CD4-positive, alpha-beta T cell (primary cell): ENCODE measurements at regions of chr16 and their contacts with region 1.

Region 1: GRCh38 chr16:71845639-71846430 is at the start of gene ATXN1L:
- DNase-seq: peak; percentile 84 to 97 (median 90)
- ATAC-seq: peak; percentile 91
- H3K4me3 ChIP-seq: peak within 1 kb of the TSS; percentile 97
- H3K4me3 Mint-ChIP-seq: peak within 1 kb of the TSS; percentile 96
- H3K27ac ChIP-seq: peak within 1 kb of the TSS; percentile 82 to 91
- H3K27ac Mint-ChIP-seq: peak within 1 kb of the TSS; percentile 99
- H3K4me1 ChIP-seq: peaks cover 18% of the 10 kb centered on the region
- H3K4me1 Mint-ChIP-seq: peaks cover 35% of the 10 kb centered on the region
- H3K27me3 ChIP-seq: no peaks in the 10 kb centered on the region
- H3K27me3 Mint-ChIP-seq: no peaks in the 10 kb centered on the region
- CTCF ChIP-seq: no peak
- total RNA-seq, gene ATXN1L: 61.0 to 61.1 TPM

Region 2: GRCh38 chr16:71788578-71788977 is 57.3 kb before region 1 on chr16:
- CTCF ChIA-PET with region 1: no interaction called
- POLR2A ChIA-PET with region 1: no interaction called
- intact Hi-C with region 1: no loop called
- DNase-seq: no peak
- ATAC-seq: no peak
- H3K4me3 ChIP-seq: no peak overlapping the region
- H3K4me3 Mint-ChIP-seq: no peak overlapping the region
- H3K27ac ChIP-seq: no peak overlapping the region
- H3K27ac Mint-ChIP-seq: no peak overlapping the region
- H3K4me1 ChIP-seq: peaks cover 23% of the 10 kb centered on the region
- H3K4me1 Mint-ChIP-seq: peaks cover 66% of the 10 kb centered on the region
- H3K27me3 ChIP-seq: no peaks in the 10 kb centered on the region
- H3K27me3 Mint-ChIP-seq: no peaks in the 10 kb centered on the region
- CTCF ChIP-seq: no peak

Region 3: GRCh38 chr16:71903608-71904007 is 57.8 kb after region 1 on chr16:
- CTCF ChIA-PET with region 1: interaction called, 3 read pairs
- POLR2A ChIA-PET with region 1: no interaction called
- intact Hi-C with region 1: loop called in 1 of 2 experiments (anchors 2 kb)
- DNase-seq: no peak
- ATAC-seq: no peak
- H3K4me3 ChIP-seq: no peak overlapping the region
- H3K4me3 Mint-ChIP-seq: peak overlapping the region; percentile 1
- H3K27ac ChIP-seq: no peak overlapping the region
- H3K27ac Mint-ChIP-seq: peak overlapping the region; percentile 71
- H3K4me1 ChIP-seq: peaks cover 59% of the 10 kb centered on the region
- H3K4me1 Mint-ChIP-seq: peaks cover 87% of the 10 kb centered on the region
- H3K27me3 ChIP-seq: no peaks in the 10 kb centered on the region
- H3K27me3 Mint-ChIP-seq: no peaks in the 10 kb centered on the region
- CTCF ChIP-seq: no peak

Region 4: DNA sequence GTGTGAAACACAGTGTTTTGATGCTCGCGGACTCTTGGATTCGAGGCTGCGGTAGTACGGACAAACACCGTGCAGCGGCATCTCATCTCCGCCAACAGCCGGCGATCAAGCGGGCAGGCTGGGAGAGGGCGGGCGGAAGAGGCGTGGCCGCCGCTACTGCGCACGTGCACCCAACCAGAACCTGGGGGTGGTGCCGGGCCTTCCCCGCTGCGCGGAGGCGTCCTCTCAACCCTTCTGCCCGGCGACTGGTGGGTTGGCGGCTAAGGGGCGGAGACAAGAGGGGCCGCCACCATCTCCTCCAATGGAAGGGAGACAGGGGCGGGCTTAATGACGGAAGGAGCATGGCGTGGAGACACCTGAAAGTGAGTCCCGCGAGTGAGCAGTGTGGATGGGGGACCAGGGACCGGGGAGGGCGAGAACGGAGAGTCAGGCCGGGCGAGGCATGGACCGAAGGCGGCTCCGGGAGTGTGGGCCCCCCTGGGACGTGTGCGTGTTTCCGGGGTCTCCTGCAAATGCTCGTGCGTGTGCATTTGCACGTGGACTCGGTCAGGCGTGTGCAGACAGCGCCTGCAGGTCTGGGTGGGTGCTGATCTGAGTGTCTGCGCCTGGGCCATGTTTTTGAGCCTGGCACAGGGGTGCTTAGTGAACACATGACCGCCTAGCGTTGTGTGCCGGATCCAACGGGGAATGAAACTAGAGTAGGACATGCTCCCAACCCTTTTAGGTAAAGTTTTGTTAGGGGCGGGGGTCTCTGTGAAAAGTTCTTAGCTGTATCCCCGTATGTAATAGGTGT is 162.8 kb after region 1 on chr16 and contains the start of gene DHODH:
- CTCF ChIA-PET with region 1: no interaction called
- POLR2A ChIA-PET with region 1: no interaction called
- intact Hi-C with region 1: loop called in 1 of 2 experiments (anchors 2 kb)
- DNase-seq: peak; percentile 94 to 99 (median 97)
- ATAC-seq: peak; percentile 99
- H3K4me3 ChIP-seq: peak within 1 kb of the TSS; percentile 99
- H3K4me3 Mint-ChIP-seq: peak within 1 kb of the TSS; percentile 96
- H3K27ac ChIP-seq: peak within 1 kb of the TSS; percentile 29 to 58
- H3K27ac Mint-ChIP-seq: peak within 1 kb of the TSS; percentile 73
- H3K4me1 ChIP-seq: peaks cover 19% of the 10 kb centered on the region
- H3K4me1 Mint-ChIP-seq: peaks cover 12% of the 10 kb centered on the region
- H3K27me3 ChIP-seq: no peaks in the 10 kb centered on the region
- H3K27me3 Mint-ChIP-seq: no peaks in the 10 kb centered on the region
- CTCF ChIP-seq: no peak
- total RNA-seq, gene DHODH: 2.5 to 2.7 TPM

Region 5: GRCh38 chr16:72085002-72085401 is 239.2 kb after region 1 on chr16:
- CTCF ChIA-PET with region 1: no interaction called
- POLR2A ChIA-PET with region 1: no interaction called
- intact Hi-C with region 1: no loop called
- DNase-seq: no peak
- ATAC-seq: no peak
- H3K4me3 ChIP-seq: no peak overlapping the region
- H3K4me3 Mint-ChIP-seq: no peak overlapping the region
- H3K27ac ChIP-seq: no peak overlapping the region
- H3K27ac Mint-ChIP-seq: no peak overlapping the region
- H3K4me1 ChIP-seq: no peaks in the 10 kb centered on the region
- H3K4me1 Mint-ChIP-seq: peaks cover under 1% of the 10 kb centered on the region
- H3K27me3 ChIP-seq: no peaks in the 10 kb centered on the region
- H3K27me3 Mint-ChIP-seq: no peaks in the 10 kb centered on the region
- CTCF ChIP-seq: no peak